Aorta (tissue), 5 donors: ENCODE measurements at regions of chr6 and their contacts with region 1.

Region 1: DNA sequence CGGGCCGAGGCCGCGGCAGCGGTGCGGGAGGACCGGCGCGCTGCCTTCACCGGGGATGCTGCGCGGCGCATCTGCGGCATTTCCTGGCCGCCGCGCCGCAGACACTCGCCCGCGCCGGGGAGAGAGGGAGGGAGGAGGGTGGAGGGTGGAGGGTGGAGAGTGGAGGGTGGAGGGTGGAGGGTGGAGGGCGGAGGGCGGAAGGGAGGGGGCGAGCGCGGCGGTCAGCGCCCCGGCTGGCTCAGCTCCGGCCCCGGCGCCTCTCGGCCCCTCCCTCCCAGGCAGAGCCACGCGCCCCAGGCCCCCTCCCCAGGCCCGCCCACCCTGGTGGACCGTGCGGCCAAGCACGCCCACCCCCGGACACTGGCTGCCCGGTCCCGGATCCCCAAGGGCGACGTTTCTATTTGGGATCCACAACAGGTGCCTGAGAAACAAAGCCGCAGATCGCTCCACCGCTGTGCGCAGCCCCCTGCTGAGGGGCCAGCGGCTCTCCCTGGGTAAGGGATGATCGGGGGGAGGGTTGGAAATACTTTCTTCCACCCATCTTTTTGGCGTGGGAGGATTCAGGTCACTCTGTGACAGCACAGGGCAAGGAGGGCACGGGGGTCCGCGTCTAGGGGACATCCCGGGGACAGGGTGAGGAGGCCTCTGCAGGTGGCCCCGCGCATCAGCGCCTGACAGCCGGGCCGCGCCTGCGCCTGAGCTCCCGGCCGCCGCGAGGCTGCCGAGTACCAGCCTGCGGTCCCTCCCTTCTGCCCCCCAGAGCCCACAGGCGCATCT is 111.1 kb upstream of the BEND6 start:
- DNase-seq: peak; percentile 85 to 89
- ATAC-seq: peak; percentile 92
- H3K4me3 ChIP-seq: peak overlapping the region; percentile 62 to 76
- H3K27ac ChIP-seq: peak overlapping the region; percentile 29 to 87
- H3K4me1 ChIP-seq: no peaks in the 10 kb centered on the region
- H3K27me3 ChIP-seq: no peaks in the 10 kb centered on the region

Region 2: GRCh38 chr6:56764081-56764566 is 79.6 kb before region 1 on chr6:
- intact Hi-C with region 1: loop called (anchors 5 kb)
- DNase-seq: no peak
- ATAC-seq: no peak
- H3K4me3 ChIP-seq: no peak overlapping the region
- H3K27ac ChIP-seq: peak overlapping the region in 1 of 2 donors; percentile 36
- H3K4me1 ChIP-seq: peaks cover 0 to 4% of the 10 kb centered on the region in 2 donors
- H3K27me3 ChIP-seq: no peaks in the 10 kb centered on the region

Region 3: GRCh38 chr6:56808871-56809359 is 34.8 kb before region 1 on chr6:
- intact Hi-C with region 1: loop called (anchors 5 kb)
- DNase-seq: no peak
- ATAC-seq: no peak
- H3K4me3 ChIP-seq: no peak overlapping the region
- H3K27ac ChIP-seq: no peak overlapping the region
- H3K4me1 ChIP-seq: peaks cover 2 to 6% of the 10 kb centered on the region in 2 donors
- H3K27me3 ChIP-seq: no peaks in the 10 kb centered on the region